ENCODE measurements at regions of chr10 and their contacts with region 1.

Region 1: DNA sequence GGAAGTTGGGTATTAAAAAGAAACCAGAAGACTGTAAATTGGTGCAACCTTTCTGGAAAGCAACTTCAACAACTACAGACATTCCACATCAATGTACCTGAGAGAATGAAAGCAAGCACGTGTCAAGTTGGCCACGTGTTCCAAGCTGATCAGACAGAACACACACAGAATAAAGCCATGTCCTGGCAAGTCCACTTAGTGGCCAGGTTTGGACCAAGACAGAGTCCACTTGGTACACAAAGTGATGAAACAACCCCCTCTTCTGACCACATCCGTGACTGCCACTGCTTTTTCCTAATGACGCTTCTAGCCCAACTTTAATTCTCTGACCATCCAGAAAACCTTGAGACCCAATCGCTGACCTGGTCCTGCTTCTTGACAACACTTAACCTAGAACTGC is 109.4 kb downstream of the ABLIM1 start:
- DNase-seq: peak; percentile 22 to 48
- H3K4me3 ChIP-seq: no peak overlapping the region
- H3K4me1 ChIP-seq: no peaks in the 10 kb centered on the region
- H3K27me3 ChIP-seq: no peaks in the 10 kb centered on the region

Region 2: DNA sequence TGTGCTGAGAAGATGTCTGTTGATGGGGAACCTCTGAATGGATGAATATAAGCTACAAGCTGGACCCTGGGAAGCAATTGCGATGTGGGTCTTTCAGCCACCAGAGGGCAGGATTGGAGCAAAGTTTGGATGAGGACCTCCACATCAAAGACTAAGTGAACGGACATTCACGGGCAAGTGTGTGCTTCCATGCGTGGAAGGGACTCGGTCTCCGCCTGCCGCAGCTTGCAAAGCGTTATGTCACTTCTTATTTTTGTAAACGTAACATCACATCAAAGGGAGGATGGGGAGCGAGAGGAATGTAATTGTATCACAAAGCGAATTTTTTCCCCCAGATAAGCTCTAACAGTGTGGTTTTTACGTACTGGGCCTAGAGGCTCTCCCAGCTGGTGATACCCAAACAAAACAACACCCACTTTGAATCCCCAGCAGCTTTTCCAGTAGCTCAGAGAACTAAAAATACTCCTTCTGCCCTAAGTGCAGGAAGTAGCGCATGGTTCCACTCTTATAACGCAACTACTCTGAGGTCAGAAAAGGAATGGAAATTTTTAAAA is 244.6 kb before region 1 on chr10:
- in situ Hi-C with region 1: loop called (anchors 5 kb)
- DNase-seq: peak; percentile 75 to 87
- H3K4me3 ChIP-seq: peak overlapping the region; percentile 25
- H3K4me1 ChIP-seq: peaks cover 4% of the 10 kb centered on the region; the same call in 1 of the 2 replicates
- H3K27me3 ChIP-seq: no peaks in the 10 kb centered on the region

Region 3: DNA sequence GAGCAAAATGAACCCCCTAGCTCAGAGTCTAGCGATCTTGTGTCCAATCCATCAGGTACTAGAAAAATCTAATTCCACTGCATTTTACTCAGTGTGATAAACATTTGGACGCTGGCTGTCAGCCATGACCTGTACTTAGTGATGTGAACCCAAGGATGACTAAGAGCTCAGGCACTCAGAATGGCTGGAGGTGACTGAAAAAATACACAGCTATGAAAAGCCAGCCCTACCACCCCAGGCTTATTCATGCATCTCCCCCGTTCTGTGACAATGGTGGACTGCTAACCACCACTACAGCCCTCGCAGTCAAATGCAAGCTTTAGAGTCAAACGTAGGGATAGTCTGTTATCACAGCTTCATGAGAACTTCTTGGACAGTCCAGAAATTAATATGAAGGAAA is 159.2 kb before region 1 on chr10:
- in situ Hi-C with region 1: no loop called
- DNase-seq: no peak
- H3K4me3 ChIP-seq: no peak overlapping the region
- H3K4me1 ChIP-seq: no peaks in the 10 kb centered on the region
- H3K27me3 ChIP-seq: no peaks in the 10 kb centered on the region

Region 4: DNA sequence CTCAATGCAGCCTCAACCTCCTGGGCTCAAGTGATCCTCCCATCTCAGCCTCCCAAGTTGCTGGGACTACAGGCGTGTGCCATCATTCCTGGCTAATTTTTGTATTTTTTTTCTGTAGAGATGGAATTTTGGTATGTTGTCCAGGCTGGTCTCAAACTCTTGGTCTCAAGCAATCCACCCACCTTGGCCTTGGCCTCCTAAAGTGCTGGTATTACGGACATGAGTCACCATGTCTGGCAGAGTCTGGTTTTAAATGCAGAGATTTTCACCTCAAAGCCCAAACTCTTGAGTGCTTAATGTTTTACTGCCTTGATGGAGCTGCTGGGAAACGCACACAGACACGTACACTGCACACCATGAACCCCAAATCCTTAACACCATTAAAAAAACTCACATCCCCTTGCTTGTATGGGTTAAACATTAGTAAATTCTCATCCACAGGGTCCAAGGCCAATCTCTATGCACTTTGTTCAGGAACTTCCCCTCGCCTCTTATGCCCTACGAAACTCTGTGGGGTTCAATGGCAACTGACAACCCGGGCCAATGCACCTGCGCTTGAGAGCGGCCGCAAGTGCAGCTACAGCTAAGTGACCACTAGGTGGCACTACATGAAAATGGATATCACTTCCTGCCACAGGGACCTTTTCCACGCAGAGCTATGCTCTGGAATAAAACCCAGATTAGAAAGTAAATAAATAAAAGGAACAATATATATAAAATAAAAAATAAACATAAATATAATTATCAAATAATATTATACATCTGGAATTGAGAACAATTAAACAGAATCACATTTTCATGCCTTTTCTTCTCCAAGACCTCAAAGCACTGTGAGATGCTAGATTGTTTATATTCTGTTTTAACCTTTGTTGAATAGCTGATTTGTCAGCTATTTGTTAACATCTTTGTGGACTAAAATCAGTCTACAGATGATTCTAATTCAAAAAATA is 77.4 kb before region 1 on chr10:
- in situ Hi-C with region 1: loop called (anchors 10 kb)
- DNase-seq: peak; percentile 62 to 70
- H3K4me3 ChIP-seq: no peak overlapping the region
- H3K4me1 ChIP-seq: 0 out of 2 replicates have a peak, but pooled peaks cover 3% of the 10 kb centered on the region
- H3K27me3 ChIP-seq: no peaks in the 10 kb centered on the region

Region 5: GRCh38 chr10:114615600-114616007 is 66.9 kb after region 1 on chr10:
- in situ Hi-C with region 1: no loop called
- DNase-seq: no peak
- H3K4me3 ChIP-seq: no peak overlapping the region
- H3K4me1 ChIP-seq: no peaks in the 10 kb centered on the region; the same call in 1 of the 2 replicates
- H3K27me3 ChIP-seq: no peaks in the 10 kb centered on the region

Region 6: GRCh38 chr10:114694752-114695151 is 146.1 kb after region 1 on chr10:
- in situ Hi-C with region 1: loop called (anchors 5 kb)
- DNase-seq: peak; percentile 51 to 76
- H3K4me3 ChIP-seq: no peak overlapping the region
- H3K4me1 ChIP-seq: no peaks in the 10 kb centered on the region; the same call in 1 of the 2 replicates
- H3K27me3 ChIP-seq: peaks cover 6% of the 10 kb centered on the region

Measured in HAP-1 (cell line).